ENCODE measurements at regions of chr19 and their contacts with region 1.

Region 1: GRCh38 chr19:2328401-2329148 is at the starts of genes LSM7 and SPPL2B:
- DNase-seq: peak; percentile 81 to 96 (median 93)
- ATAC-seq: peak; percentile 62
- H3K4me3 ChIP-seq: peak within 1 kb of the TSS; percentile 77 to 93
- H3K4me3 Mint-ChIP-seq: peak within 1 kb of the TSS; percentile 97
- H3K27ac ChIP-seq: peak within 1 kb of the TSS; percentile 71 to 82
- H3K27ac Mint-ChIP-seq: peak within 1 kb of the TSS; percentile 99
- H3K4me1 ChIP-seq: peaks cover 60% of the 10 kb centered on the region
- H3K4me1 Mint-ChIP-seq: peaks cover 62% of the 10 kb centered on the region
- H3K27me3 ChIP-seq: no peaks in the 10 kb centered on the region
- H3K27me3 Mint-ChIP-seq: no peaks in the 10 kb centered on the region
- CTCF ChIP-seq: no peak
- total RNA-seq, gene LSM7: 103 to 113 TPM
- total RNA-seq, gene SPPL2B: 123 to 126 TPM

Region 2: DNA sequence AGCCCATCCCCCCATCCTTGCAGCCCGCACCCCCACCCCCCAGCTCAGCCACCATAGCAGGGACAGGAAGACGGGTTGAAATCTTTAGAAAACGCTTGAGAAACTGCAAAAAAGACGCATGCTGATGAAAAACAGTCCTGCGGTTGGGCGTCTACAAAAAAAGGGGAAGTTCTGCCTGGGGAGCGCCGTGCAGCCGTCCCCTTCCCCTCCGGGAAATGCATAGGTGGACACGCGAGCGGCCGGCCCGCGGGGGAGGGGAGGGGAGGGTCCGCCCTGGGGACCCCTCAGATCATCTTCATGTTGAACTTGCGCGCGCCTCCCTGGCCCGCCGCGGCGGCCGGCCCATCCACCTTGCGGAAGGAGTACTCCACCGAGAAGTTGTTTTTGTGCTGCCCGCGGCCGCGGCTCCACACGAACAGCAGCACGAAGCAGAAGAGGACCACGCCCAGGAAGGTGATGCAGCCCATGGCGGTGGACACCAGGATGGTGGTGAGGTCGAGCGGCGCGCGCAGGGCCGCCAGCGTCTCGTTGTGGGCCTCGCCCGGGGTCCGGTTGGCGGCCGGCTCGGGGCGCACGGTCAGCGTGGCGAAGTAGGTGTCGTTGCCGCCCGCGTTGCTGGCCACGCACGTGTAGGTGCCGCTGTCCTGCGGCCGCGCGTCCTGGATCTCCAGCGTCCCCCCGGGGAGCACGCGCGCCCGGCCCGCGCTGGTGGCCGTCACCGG is 38.7 kb before region 1 on chr19:
- CTCF ChIA-PET with region 1: interaction called, 6 read pairs
- POLR2A ChIA-PET with region 1: interaction called, 4 read pairs
- intact Hi-C with region 1: loop called (anchors 1 to 5 kb)
- DNase-seq: peak in 8 of 9 experiments; percentile 52 to 88 (median 64)
- ATAC-seq: peak; percentile 66
- H3K4me3 ChIP-seq: peak overlapping the region; percentile 67 to 77
- H3K4me3 Mint-ChIP-seq: peak overlapping the region; percentile 90
- H3K27ac ChIP-seq: peak overlapping the region; percentile 54 to 71
- H3K27ac Mint-ChIP-seq: peak overlapping the region; percentile 90
- H3K4me1 ChIP-seq: peaks cover 21% of the 10 kb centered on the region
- H3K4me1 Mint-ChIP-seq: peaks cover 33% of the 10 kb centered on the region
- H3K27me3 ChIP-seq: no peaks in the 10 kb centered on the region
- H3K27me3 Mint-ChIP-seq: no peaks in the 10 kb centered on the region
- CTCF ChIP-seq: no peak

Region 3: GRCh38 chr19:2302319-2303210 is 26.0 kb before region 1 on chr19:
- CTCF ChIA-PET with region 1: no interaction called
- POLR2A ChIA-PET with region 1: no interaction called
- intact Hi-C with region 1: no loop called
- DNase-seq: peak in 2 of 9 experiments; percentile 20 to 51
- ATAC-seq: peak; percentile 58
- H3K4me3 ChIP-seq: no peak overlapping the region
- H3K4me3 Mint-ChIP-seq: peak overlapping the region; percentile 64
- H3K27ac ChIP-seq: no peak overlapping the region
- H3K27ac Mint-ChIP-seq: no peak overlapping the region
- H3K4me1 ChIP-seq: peaks cover 17% of the 10 kb centered on the region
- H3K4me1 Mint-ChIP-seq: peaks cover 5% of the 10 kb centered on the region
- H3K27me3 ChIP-seq: peaks cover 6 to 19% of the 10 kb centered on the region in 2 experiments
- H3K27me3 Mint-ChIP-seq: peaks cover 27% of the 10 kb centered on the region
- CTCF ChIP-seq: no peak

Region 4: GRCh38 chr19:2427429-2428320 is 99.1 kb after region 1 on chr19 and contains the start of gene TIMM13:
- CTCF ChIA-PET with region 1: interaction called, 3 read pairs
- POLR2A ChIA-PET with region 1: no interaction called
- intact Hi-C with region 1: loop called (anchors 1 kb)
- DNase-seq: peak; percentile 91 to 98 (median 96)
- ATAC-seq: peak; percentile 94
- H3K4me3 ChIP-seq: peak within 1 kb of the TSS; percentile 92 to 98
- H3K4me3 Mint-ChIP-seq: peak within 1 kb of the TSS; percentile 95
- H3K27ac ChIP-seq: peak within 1 kb of the TSS; percentile 96 to 99
- H3K27ac Mint-ChIP-seq: peak within 1 kb of the TSS; percentile 98
- H3K4me1 ChIP-seq: peaks cover 19% of the 10 kb centered on the region
- H3K4me1 Mint-ChIP-seq: peaks cover 13% of the 10 kb centered on the region
- H3K27me3 ChIP-seq: no peaks in the 10 kb centered on the region
- H3K27me3 Mint-ChIP-seq: no peaks in the 10 kb centered on the region
- CTCF ChIP-seq: no peak
- total RNA-seq, gene TIMM13: 21.5 to 24.4 TPM

Region 5: DNA sequence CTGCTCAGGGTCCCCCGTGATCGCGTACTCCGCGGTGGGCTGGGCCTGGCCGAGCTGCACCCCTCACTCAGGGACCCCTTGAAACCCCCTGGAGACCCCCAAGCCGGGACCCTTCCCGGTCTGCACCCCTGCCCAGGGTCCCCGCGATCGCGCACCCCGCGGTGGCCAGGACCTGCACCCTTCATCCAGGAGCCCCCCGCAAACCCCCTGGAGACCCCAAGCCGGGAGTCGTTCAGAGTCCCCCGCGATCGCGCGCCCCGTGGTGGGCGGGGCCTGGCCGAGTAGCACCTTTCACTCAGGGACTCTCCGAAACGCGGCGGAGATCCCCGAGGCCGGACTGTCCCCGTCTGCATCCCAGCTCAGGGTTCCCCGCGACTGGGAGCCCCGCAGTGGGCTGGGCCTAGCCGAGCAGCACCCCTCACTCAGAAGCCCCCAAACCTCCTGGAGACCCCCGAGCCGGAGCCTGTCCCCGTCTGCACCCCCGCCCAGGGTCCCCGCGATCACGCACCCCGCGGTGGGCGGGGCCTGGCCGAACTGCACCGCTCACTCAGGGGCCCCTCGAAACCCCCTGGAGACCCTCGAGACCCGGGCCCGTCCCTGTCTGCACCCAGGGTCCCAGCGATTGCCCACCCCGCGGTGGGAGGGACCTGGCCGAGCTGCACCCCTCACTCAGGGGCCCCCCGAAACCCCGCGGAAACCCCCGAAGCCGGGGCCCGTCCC is 127.4 kb after region 1 on chr19:
- CTCF ChIA-PET with region 1: no interaction called
- POLR2A ChIA-PET with region 1: interaction called, 3 read pairs
- intact Hi-C with region 1: loop called (anchors 1 to 5 kb)
- DNase-seq: peak in 7 of 9 experiments; percentile 22 to 87 (median 52)
- ATAC-seq: peak; percentile 41
- H3K4me3 ChIP-seq: peak overlapping the region; percentile 62 to 80
- H3K4me3 Mint-ChIP-seq: peak overlapping the region; percentile 83
- H3K27ac ChIP-seq: peak overlapping the region; percentile 32 to 50
- H3K27ac Mint-ChIP-seq: peak overlapping the region; percentile 75
- H3K4me1 ChIP-seq: peaks cover 14% of the 10 kb centered on the region
- H3K4me1 Mint-ChIP-seq: peaks cover 13% of the 10 kb centered on the region
- H3K27me3 ChIP-seq: no peaks in the 10 kb centered on the region
- H3K27me3 Mint-ChIP-seq: no peaks in the 10 kb centered on the region
- CTCF ChIP-seq: no peak

Measured in CD8-positive, alpha-beta T cell (primary cell).